Testis (tissue), 5 donors: ENCODE measurements at regions of chr11 and their contacts with region 1.

Region 1: GRCh38 chr11:10792398-10792975 is 16.2 kb downstream of the EIF4G2 start:
- DNase-seq: peak; percentile 89
- H3K4me3 ChIP-seq: no peak overlapping the region
- H3K27ac ChIP-seq: no peak overlapping the region
- H3K4me1 ChIP-seq: no peaks in the 10 kb centered on the region
- H3K27me3 ChIP-seq: no peaks in the 10 kb centered on the region
- CTCF ChIP-seq: peak; percentile 76 to 83 (median 83)
- POLR2A ChIP-seq: no peak

Region 2: DNA sequence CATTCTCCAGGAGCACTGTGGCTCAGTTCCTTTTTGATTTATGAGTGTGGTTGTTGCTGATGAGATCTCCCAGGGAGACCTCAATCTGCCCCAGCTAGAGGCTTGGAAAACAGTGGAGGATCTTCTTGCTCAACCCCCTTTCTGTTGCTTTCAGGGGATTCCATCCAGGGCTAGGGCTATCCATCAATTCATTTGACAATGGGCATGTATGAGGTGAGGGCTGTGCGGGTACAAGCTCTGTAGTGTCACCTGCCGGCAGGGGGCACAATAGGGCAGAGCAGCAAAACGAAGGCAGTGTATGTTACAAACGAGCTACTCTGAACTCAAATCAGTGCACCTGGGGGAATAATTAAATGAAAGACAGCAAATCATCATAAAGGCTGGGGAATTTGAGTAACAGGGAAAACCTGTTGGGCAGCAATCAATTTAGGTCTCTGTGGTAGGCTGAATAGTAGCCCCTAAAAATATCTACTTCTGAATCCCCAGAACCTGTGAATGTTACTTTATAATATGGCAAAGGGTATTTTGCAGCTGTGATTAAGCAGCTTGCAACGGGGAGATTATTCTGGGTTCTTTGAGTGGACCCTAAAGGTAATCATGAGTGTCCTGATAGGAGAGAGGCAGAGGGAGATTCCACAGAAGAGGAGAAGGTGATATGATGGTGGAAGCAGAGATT is 235.7 kb after region 1 on chr11:
- intact Hi-C with region 1: loop called (anchors 10 kb)
- DNase-seq: peak; percentile 82
- H3K4me3 ChIP-seq: no peak overlapping the region
- H3K27ac ChIP-seq: no peak overlapping the region
- H3K4me1 ChIP-seq: no peaks in the 10 kb centered on the region
- H3K27me3 ChIP-seq: no peaks in the 10 kb centered on the region
- CTCF ChIP-seq: peak; percentile 52 to 61 (median 59)
- POLR2A ChIP-seq: no peak

Region 3: GRCh38 chr11:11069841-11070835 is 277.7 kb after region 1 on chr11:
- intact Hi-C with region 1: no loop called
- DNase-seq: no peak
- H3K4me3 ChIP-seq: no peak overlapping the region
- H3K27ac ChIP-seq: no peak overlapping the region
- H3K4me1 ChIP-seq: no peaks in the 10 kb centered on the region
- H3K27me3 ChIP-seq: no peaks in the 10 kb centered on the region
- CTCF ChIP-seq: no peak
- POLR2A ChIP-seq: no peak